CD4-positive, alpha-beta T cell (primary cell): ENCODE measurements at regions of chr20 and their contacts with region 1.

Region 1: GRCh38 chr20:36199345-36200257 is 36.7 kb upstream of the AAR2 start:
- DNase-seq: peak; percentile 56 to 82 (median 70)
- ATAC-seq: peak; percentile 72
- H3K4me3 ChIP-seq: no peak overlapping the region
- H3K4me3 Mint-ChIP-seq: no peak overlapping the region
- H3K27ac ChIP-seq: no peak overlapping the region
- H3K27ac Mint-ChIP-seq: no peak overlapping the region
- H3K4me1 ChIP-seq: peaks cover 11% of the 10 kb centered on the region
- H3K4me1 Mint-ChIP-seq: peaks cover 6% of the 10 kb centered on the region
- H3K27me3 ChIP-seq: no peaks in the 10 kb centered on the region
- H3K27me3 Mint-ChIP-seq: peaks cover 18% of the 10 kb centered on the region
- CTCF ChIP-seq: peak; percentile 89

Region 2: DNA sequence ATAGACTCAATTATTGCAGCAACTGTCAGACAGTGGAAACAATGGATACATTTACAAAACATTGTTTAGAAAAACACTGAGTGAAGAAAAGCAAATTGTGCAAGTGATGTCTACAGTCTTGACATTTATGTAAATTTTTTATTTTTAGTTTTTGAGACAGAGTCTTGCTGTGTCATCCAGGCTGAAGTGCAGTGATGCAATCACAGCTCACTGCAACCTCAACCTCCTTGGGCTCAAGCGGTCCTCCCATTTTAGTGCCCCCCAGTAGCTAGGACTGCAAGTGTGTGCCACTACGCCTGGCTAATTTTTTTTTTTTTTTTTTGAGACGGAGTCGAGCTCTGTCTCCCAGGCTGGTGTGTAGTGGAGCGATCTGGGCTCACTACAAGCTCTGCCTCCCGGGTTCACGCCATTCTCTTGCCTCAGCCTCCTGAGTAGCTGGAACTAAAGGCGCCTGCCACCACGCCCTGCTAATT is 221.5 kb before region 1 on chr20:
- CTCF ChIA-PET with region 1: no interaction called
- POLR2A ChIA-PET with region 1: no interaction called
- intact Hi-C with region 1: no loop called
- DNase-seq: no peak
- ATAC-seq: no peak
- H3K4me3 ChIP-seq: no peak overlapping the region
- H3K4me3 Mint-ChIP-seq: no peak overlapping the region
- H3K27ac ChIP-seq: no peak overlapping the region
- H3K27ac Mint-ChIP-seq: no peak overlapping the region
- H3K4me1 ChIP-seq: no peaks in the 10 kb centered on the region
- H3K4me1 Mint-ChIP-seq: no peaks in the 10 kb centered on the region
- H3K27me3 ChIP-seq: no peaks in the 10 kb centered on the region
- H3K27me3 Mint-ChIP-seq: peaks cover 4% of the 10 kb centered on the region
- CTCF ChIP-seq: no peak

Region 3: DNA sequence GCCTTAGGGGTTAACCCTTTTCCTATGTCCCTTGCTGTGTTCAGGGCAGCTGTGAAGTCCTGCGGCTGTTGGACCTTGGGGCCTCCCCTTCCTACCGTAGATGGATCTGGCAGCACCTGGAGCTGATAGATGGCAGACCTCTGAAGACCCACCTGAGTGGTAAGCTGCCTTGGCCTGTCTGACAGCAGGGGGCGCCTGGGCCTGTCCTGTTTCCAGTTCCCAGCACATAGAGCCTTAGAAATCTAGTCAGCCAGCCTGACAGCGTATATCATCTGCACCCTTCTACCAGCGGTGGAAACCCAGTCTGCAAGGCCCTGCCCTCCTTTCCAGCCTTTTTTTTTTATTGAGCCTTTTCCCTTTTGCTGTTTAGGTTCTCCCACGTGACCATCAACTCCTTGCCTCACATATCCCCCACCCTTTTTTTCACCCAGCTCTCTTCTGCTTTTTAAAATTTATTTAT is 204.6 kb before region 1 on chr20:
- CTCF ChIA-PET with region 1: interaction called, 12 read pairs
- POLR2A ChIA-PET with region 1: no interaction called
- intact Hi-C with region 1: loop called in 1 of 2 experiments (anchors 2 kb)
- DNase-seq: peak; percentile 76 to 89 (median 82)
- ATAC-seq: peak; percentile 85
- H3K4me3 ChIP-seq: no peak overlapping the region
- H3K4me3 Mint-ChIP-seq: no peak overlapping the region
- H3K27ac ChIP-seq: no peak overlapping the region
- H3K27ac Mint-ChIP-seq: no peak overlapping the region
- H3K4me1 ChIP-seq: peaks cover 7% of the 10 kb centered on the region
- H3K4me1 Mint-ChIP-seq: no peaks in the 10 kb centered on the region
- H3K27me3 ChIP-seq: no peaks in the 10 kb centered on the region
- H3K27me3 Mint-ChIP-seq: peaks cover 5% of the 10 kb centered on the region
- CTCF ChIP-seq: peak; percentile 89

Region 4: DNA sequence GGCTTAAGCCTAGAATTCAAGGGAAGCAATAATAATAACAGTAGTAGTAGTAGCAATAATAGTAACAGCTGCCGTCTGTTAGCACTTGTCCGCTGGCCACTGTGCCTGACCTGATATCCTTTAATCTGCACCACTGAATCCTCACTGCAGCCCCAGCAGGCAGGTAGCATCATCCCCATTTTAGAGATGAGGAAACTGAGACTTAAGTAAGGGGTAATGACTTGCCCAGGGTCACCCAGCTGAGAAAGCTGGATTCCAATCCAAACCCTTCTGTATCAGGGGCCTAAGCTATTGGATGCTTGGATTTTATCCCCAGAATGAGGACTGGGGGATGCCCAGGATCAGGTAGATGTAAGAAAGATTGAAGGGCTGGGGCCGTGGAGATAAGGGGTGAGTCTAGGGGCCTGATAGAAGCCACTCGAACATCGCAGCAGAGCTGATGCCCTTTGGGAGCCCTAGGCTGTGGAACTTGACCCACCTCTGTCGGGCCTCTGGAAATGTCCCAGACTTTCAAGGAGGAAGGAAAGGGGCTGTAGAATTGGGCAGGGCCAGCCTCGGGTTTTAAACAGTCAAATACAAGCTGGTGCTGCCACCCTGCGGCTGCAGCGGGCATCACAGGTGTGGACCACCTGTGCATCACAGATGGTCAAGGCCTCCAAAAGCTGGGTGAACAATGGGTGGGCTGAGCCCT is 239.6 kb after region 1 on chr20:
- CTCF ChIA-PET with region 1: interaction called, 19 read pairs
- POLR2A ChIA-PET with region 1: interaction called, 3 read pairs
- intact Hi-C with region 1: loop called (anchors 1 kb)
- DNase-seq: peak; percentile 44 to 76 (median 55)
- ATAC-seq: peak; percentile 28
- H3K4me3 ChIP-seq: no peak overlapping the region
- H3K4me3 Mint-ChIP-seq: no peak overlapping the region
- H3K27ac ChIP-seq: no peak overlapping the region
- H3K27ac Mint-ChIP-seq: no peak overlapping the region
- H3K4me1 ChIP-seq: peaks cover 21% of the 10 kb centered on the region
- H3K4me1 Mint-ChIP-seq: peaks cover 4% of the 10 kb centered on the region
- H3K27me3 ChIP-seq: no peaks in the 10 kb centered on the region
- H3K27me3 Mint-ChIP-seq: peaks cover 13% of the 10 kb centered on the region
- CTCF ChIP-seq: peak; percentile 83

Region 5: GRCh38 chr20:36591854-36592641 is 392.4 kb after region 1 on chr20:
- CTCF ChIA-PET with region 1: no interaction called
- POLR2A ChIA-PET with region 1: no interaction called
- intact Hi-C with region 1: loop called in 1 of 2 experiments (anchors 10 kb)
- DNase-seq: peak in 11 of 14 experiments; percentile 27 to 88 (median 55)
- ATAC-seq: peak; percentile 51
- H3K4me3 ChIP-seq: no peak overlapping the region
- H3K4me3 Mint-ChIP-seq: peak overlapping the region; percentile 63
- H3K27ac ChIP-seq: peak overlapping the region in 1 of 2 donors; percentile 54
- H3K27ac Mint-ChIP-seq: peak overlapping the region; percentile 95
- H3K4me1 ChIP-seq: peaks cover 69% of the 10 kb centered on the region
- H3K4me1 Mint-ChIP-seq: peaks cover 52% of the 10 kb centered on the region
- H3K27me3 ChIP-seq: no peaks in the 10 kb centered on the region
- H3K27me3 Mint-ChIP-seq: no peaks in the 10 kb centered on the region
- CTCF ChIP-seq: peak; percentile 59

Region 6: DNA sequence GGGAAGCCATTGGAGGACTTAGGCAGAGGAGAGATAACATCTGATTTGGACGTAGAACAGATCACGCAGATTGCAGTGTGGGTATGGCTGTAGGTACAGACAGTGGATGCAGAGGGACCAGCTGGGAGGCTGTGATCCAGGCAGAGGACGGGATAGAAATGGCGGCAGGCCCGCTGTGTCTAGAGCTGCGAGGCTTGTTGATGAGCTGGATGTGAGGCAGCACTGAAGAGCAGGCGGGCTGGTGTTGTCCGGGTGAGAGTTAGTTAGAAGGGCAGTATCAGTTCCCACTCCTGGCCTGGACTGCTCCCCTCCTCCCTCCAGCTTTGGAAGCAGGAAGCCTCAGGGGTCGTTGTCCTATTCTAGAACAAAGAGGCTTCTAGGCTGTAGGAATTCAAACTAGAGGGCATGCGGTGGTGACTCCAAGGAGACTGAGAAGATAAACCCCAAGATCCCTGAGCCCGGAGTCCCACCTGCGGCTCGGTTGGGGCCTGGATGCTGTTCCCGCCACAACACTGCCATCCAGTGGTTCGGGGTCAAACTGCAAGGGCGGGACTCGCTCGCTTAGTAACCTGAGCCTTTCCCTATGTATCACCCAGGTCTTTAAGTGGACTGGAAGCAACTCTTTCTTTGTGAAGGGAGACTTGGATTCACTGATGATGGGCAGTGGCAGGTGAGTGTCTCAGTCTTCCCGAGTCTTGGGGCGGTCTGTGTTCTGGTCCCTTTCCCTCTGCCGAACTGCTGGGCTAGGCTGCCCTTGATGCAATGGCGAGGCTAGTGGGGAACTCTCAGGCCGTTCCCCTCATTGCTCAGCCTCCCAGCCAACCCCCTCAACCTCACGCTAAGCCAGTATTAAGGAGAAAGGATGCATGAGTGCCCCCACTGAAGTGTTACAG is 687.5 kb after region 1 on chr20:
- CTCF ChIA-PET with region 1: no interaction called
- POLR2A ChIA-PET with region 1: no interaction called
- intact Hi-C with region 1: loop called in 1 of 2 experiments (anchors 10 kb)
- DNase-seq: peak; percentile 62 to 86 (median 76)
- ATAC-seq: peak; percentile 88
- H3K4me3 ChIP-seq: no peak overlapping the region
- H3K4me3 Mint-ChIP-seq: no peak overlapping the region
- H3K27ac ChIP-seq: peak overlapping the region; percentile 25 to 34
- H3K27ac Mint-ChIP-seq: peak overlapping the region; percentile 61
- H3K4me1 ChIP-seq: peaks cover 13% of the 10 kb centered on the region
- H3K4me1 Mint-ChIP-seq: peaks cover 16% of the 10 kb centered on the region
- H3K27me3 ChIP-seq: no peaks in the 10 kb centered on the region
- H3K27me3 Mint-ChIP-seq: no peaks in the 10 kb centered on the region
- CTCF ChIP-seq: peak; percentile 80